ENCODE measurements at regions of chrX and their contacts with region 1.

Region 1: DNA sequence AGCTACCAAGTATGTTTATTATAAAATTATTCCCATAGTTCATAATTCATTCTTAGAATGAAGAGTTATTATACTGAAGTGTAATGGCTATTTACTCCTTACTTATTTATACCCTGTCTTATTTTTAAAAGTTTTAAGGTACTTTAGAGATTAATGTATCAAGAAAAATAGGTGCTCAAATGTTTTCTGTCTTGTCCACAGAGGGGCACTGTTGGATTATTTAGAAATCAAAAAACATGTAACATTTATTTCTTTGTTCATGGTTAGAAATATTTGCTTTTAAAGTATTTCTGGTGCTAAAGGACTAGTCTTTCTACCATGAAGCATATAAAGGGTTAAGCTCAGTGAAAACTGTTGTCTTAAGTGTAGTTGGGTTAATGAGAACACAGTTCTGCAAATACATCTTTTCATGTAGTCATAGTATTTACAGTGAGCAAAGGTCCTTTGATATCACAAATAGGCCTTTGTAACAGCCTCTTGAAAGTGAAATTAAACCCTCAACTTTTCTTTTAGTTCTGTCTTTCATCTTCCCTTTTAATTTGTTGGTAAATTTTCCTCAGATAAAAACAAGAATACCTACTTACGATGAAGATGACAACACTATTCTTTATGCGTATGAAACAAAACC is 7.7 kb downstream of the SCML1 start:
- DNase-seq: peak in 1 of 9 experiments; percentile 24
- ATAC-seq: no peak
- H3K4me3 ChIP-seq: no peak overlapping the region
- H3K4me3 Mint-ChIP-seq: no peak overlapping the region
- H3K27ac ChIP-seq: no peak overlapping the region
- H3K27ac Mint-ChIP-seq: no peak overlapping the region
- H3K4me1 ChIP-seq: peaks cover 11% of the 10 kb centered on the region
- H3K4me1 Mint-ChIP-seq: peaks cover 41% of the 10 kb centered on the region
- H3K27me3 ChIP-seq: no peaks in the 10 kb centered on the region
- H3K27me3 Mint-ChIP-seq: no peaks in the 10 kb centered on the region
- CTCF ChIP-seq: peak; percentile 40

Region 2: DNA sequence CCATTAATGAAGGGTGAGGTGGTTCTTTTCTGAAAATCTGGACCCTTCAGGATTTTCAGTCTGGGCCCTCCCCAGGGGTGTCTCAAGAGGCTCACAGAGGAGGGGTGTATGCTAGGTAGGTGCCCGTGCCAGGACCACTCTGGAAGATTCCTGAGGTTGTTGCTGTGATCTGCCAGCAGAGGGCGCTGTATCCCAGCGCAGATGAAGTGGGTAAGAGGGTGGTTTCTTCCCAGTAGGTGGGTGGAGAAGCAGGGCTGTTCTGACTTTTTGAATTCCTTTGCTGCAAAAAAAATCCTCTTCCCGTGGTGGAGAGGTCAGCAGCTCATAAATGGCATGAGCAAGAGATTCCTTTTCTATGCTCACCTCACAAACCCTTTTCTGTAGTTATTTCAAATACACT is 43.4 kb after region 1 on chrX:
- CTCF ChIA-PET with region 1: no interaction called
- POLR2A ChIA-PET with region 1: no interaction called
- intact Hi-C with region 1: loop called in 1 of 2 experiments (anchors 5 kb)
- DNase-seq: peak in 8 of 9 experiments; percentile 1 to 63 (median 42)
- ATAC-seq: peak; percentile 54
- H3K4me3 ChIP-seq: no peak overlapping the region
- H3K4me3 Mint-ChIP-seq: no peak overlapping the region
- H3K27ac ChIP-seq: no peak overlapping the region
- H3K27ac Mint-ChIP-seq: no peak overlapping the region
- H3K4me1 ChIP-seq: no peaks in the 10 kb centered on the region
- H3K4me1 Mint-ChIP-seq: peaks cover 9% of the 10 kb centered on the region
- H3K27me3 ChIP-seq: no peaks in the 10 kb centered on the region
- H3K27me3 Mint-ChIP-seq: no peaks in the 10 kb centered on the region
- CTCF ChIP-seq: peak; percentile 57

Region 3: GRCh38 chrX:17987783-17988182 is 242.8 kb after region 1 on chrX:
- CTCF ChIA-PET with region 1: no interaction called
- POLR2A ChIA-PET with region 1: no interaction called
- intact Hi-C with region 1: loop called in 1 of 2 experiments (anchors 10 kb)
- DNase-seq: peak in 3 of 9 experiments; percentile 19 to 59 (median 25)
- ATAC-seq: peak; percentile 77
- H3K4me3 ChIP-seq: no peak overlapping the region
- H3K4me3 Mint-ChIP-seq: peak overlapping the region; percentile 43
- H3K27ac ChIP-seq: no peak overlapping the region
- H3K27ac Mint-ChIP-seq: peak overlapping the region; percentile 70
- H3K4me1 ChIP-seq: peaks cover 26% of the 10 kb centered on the region
- H3K4me1 Mint-ChIP-seq: peaks cover 35% of the 10 kb centered on the region
- H3K27me3 ChIP-seq: no peaks in the 10 kb centered on the region
- H3K27me3 Mint-ChIP-seq: no peaks in the 10 kb centered on the region
- CTCF ChIP-seq: no peak

Region 4: DNA sequence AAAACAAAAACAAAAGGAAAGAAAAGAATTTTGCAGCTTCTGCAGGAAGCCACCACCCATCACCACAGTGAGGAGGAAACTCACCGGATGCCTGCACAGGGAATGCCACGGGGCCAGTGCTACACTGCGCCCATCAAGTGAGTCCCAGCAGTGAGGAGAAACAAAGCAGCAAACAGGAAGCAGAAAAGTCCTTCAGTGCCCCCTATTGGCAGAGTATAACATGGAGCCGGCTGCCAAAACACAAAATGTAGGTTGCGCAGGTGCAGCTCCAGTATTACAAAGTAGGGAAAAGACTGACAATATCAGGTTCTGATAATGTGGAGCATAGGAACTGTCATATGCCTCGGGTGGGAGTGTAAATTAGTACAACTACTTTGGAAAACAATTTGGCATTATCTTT is 632.8 kb after region 1 on chrX:
- CTCF ChIA-PET with region 1: no interaction called
- POLR2A ChIA-PET with region 1: no interaction called
- intact Hi-C with region 1: loop called in 1 of 2 experiments (anchors 2 kb)
- DNase-seq: peak in 4 of 9 experiments; percentile 11 to 53 (median 26)
- ATAC-seq: peak; percentile 49
- H3K4me3 ChIP-seq: no peak overlapping the region
- H3K4me3 Mint-ChIP-seq: no peak overlapping the region
- H3K27ac ChIP-seq: no peak overlapping the region
- H3K27ac Mint-ChIP-seq: no peak overlapping the region
- H3K4me1 ChIP-seq: no peaks in the 10 kb centered on the region
- H3K4me1 Mint-ChIP-seq: peaks cover 5% of the 10 kb centered on the region
- H3K27me3 ChIP-seq: no peaks in the 10 kb centered on the region
- H3K27me3 Mint-ChIP-seq: no peaks in the 10 kb centered on the region
- CTCF ChIP-seq: peak; percentile 29